Activated naive CD4-positive, alpha-beta T cell treated with anti-CD3 and anti-CD28 coated beads for 36 hours (primary cell): ENCODE measurements at regions of chr1 and their contacts with region 1.

Region 1: GRCh38 chr1:30718636-30719405 is 4.6 kb downstream of the MATN1 start:
- DNase-seq: peak; percentile 88
- H3K4me3 Mint-ChIP-seq: peak overlapping the region; percentile 94
- H3K27ac Mint-ChIP-seq: peak overlapping the region; percentile 92
- H3K4me1 Mint-ChIP-seq: peaks cover 21% of the 10 kb centered on the region
- H3K27me3 Mint-ChIP-seq: no peaks in the 10 kb centered on the region

Region 2: DNA sequence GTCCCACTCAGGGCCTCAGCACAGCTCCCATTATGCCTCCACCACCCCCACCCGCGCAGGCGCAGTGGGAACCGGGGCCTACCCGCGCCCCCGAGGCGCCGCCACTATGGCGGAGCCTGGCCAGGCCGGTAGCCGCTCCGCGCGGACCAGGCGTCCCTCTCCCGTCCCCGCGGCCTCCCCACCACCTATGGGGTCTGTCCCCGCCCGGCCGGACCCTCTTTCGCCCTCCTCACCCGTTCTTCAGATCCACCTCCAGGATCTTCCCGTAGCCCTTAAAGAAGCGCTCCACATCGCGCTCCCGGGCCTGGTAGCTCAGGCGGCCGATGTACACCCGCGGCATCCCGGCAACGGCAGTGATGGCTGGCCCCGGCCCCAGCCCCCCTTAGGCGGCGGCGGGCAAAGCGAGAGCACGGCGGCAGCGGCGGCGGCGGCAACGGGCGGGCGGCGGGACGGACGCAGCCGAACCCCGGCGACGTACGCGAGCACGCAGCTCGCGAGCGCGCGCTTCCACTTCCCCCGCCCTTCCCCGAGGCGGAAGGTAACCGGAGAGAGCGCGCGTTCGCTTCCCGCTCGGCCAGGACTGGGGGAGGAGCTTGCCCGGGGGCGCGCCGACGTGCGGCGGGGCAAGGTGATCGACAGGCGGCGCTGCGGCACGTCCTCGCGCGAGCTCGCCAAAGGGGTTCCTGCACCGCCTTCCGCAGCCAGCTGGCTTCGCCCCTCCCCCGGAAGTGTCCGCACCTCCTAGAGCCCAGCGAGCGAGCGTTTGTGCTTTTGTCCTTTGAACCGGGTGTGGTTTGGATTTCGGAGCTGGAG is 1537.2 kb before region 1 on chr1 and contains the start of gene SRSF4:
- CTCF ChIA-PET with region 1: no interaction called
- intact Hi-C with region 1: loop called (anchors 1 kb)
- DNase-seq: peak; percentile 99
- H3K4me3 Mint-ChIP-seq: peak within 1 kb of the TSS; percentile 93
- H3K27ac Mint-ChIP-seq: peak within 1 kb of the TSS; percentile 98
- H3K4me1 Mint-ChIP-seq: peaks cover 37% of the 10 kb centered on the region
- H3K27me3 Mint-ChIP-seq: no peaks in the 10 kb centered on the region
- total RNA-seq, gene SRSF4: 166 to 170 TPM

Region 3: DNA sequence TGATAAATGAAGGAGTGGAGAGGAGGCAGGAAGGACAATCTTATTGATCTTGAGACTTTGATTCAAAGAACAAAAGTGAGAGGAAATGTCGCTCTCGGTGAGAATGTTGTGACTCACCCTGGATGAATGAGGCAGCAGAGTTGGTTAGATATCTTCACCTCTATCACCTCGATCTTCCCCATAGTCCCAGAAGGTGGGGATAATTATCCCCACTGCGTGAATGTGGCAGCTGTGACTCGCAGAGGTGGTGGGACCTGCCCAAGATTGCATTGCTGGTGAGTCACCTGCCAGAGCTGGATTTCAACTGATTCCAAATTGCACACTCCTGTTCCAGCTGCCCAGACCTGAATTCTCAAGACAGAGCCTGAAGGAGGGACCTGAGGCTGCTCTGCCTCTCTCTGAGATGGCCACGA is 100.5 kb before region 1 on chr1:
- CTCF ChIA-PET with region 1: no interaction called
- intact Hi-C with region 1: no loop called
- DNase-seq: peak; percentile 20
- H3K4me3 Mint-ChIP-seq: no peak overlapping the region
- H3K27ac Mint-ChIP-seq: no peak overlapping the region
- H3K4me1 Mint-ChIP-seq: peaks cover 5% of the 10 kb centered on the region
- H3K27me3 Mint-ChIP-seq: no peaks in the 10 kb centered on the region

Region 4: DNA sequence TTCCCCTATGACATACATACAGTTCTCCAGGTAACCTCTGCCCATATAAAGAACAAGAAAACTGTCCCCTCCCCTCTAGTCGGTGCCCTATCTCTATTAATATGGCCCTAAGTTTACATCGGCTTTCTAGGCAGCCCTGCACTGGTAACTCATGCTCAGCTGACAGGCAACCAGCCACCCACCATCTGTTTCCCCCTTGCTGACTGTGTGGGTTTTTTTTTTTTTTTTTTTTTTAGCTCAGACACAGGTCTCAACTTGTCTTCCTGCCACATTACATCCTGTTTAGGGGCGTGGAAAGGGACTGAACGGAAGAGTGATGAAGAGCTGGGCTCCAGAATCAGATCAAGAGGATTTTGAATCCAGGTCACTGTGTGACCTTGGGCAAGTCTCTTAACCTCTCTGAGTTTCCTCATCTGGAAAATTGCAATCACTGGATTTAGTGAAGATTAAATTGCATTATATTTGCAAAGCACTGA is 24.8 kb after region 1 on chr1:
- CTCF ChIA-PET with region 1: interaction called, 14 read pairs
- intact Hi-C with region 1: loop called (anchors 1 kb)
- DNase-seq: peak; percentile 86
- H3K4me3 Mint-ChIP-seq: peak overlapping the region; percentile 59
- H3K27ac Mint-ChIP-seq: peak overlapping the region; percentile 100
- H3K4me1 Mint-ChIP-seq: peaks cover 89% of the 10 kb centered on the region
- H3K27me3 Mint-ChIP-seq: no peaks in the 10 kb centered on the region

Region 5: DNA sequence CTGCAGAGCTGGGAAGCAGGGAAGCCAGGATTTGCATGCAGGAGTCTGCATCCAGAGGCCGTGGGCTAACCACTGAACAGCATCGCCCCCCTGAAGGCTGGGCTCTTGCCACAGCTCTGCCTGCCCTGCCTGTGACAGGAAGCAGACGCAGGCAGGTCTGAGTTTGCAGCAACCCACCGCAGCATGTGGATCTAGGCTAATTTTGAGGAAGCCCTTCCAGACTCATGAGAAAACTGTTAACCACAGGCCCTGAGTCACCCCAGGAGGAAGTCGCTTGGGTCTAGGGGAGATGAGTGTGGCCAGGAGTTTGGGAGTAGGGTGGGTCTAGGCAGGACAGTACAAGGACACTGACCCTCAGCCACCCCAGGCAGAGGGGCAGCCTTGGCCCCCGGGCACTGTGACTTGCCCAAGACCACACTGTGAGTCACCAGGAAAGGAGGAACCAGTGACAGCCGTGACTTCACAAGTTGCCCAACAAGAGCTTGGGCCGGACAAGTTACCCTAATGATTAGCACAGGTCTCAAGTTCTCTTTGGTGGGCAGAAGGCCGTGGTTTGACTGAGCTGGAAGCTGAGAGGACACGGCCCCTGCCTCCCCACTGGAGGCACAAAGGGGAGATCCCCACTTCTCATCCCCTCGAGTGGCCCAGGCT is 37.8 kb after region 1 on chr1:
- CTCF ChIA-PET with region 1: interaction called, 39 read pairs
- intact Hi-C with region 1: loop called (anchors 1 kb)
- DNase-seq: peak; percentile 91
- H3K4me3 Mint-ChIP-seq: peak overlapping the region; percentile 98
- H3K27ac Mint-ChIP-seq: peak overlapping the region; percentile 100
- H3K4me1 Mint-ChIP-seq: peaks cover 76% of the 10 kb centered on the region
- H3K27me3 Mint-ChIP-seq: no peaks in the 10 kb centered on the region

Region 6: GRCh38 chr1:30801771-30802198 is 83.0 kb after region 1 on chr1:
- CTCF ChIA-PET with region 1: interaction called, 23 read pairs
- intact Hi-C with region 1: no loop called
- DNase-seq: peak; percentile 88
- H3K4me3 Mint-ChIP-seq: no peak overlapping the region
- H3K27ac Mint-ChIP-seq: no peak overlapping the region
- H3K4me1 Mint-ChIP-seq: peaks cover 3% of the 10 kb centered on the region
- H3K27me3 Mint-ChIP-seq: peaks cover 28% of the 10 kb centered on the region

Region 7: GRCh38 chr1:30888391-30888790 is 169.6 kb after region 1 on chr1:
- CTCF ChIA-PET with region 1: no interaction called
- intact Hi-C with region 1: no loop called
- DNase-seq: no peak
- H3K4me3 Mint-ChIP-seq: no peak overlapping the region
- H3K27ac Mint-ChIP-seq: no peak overlapping the region
- H3K4me1 Mint-ChIP-seq: no peaks in the 10 kb centered on the region
- H3K27me3 Mint-ChIP-seq: peaks cover 3% of the 10 kb centered on the region

Region 8: DNA sequence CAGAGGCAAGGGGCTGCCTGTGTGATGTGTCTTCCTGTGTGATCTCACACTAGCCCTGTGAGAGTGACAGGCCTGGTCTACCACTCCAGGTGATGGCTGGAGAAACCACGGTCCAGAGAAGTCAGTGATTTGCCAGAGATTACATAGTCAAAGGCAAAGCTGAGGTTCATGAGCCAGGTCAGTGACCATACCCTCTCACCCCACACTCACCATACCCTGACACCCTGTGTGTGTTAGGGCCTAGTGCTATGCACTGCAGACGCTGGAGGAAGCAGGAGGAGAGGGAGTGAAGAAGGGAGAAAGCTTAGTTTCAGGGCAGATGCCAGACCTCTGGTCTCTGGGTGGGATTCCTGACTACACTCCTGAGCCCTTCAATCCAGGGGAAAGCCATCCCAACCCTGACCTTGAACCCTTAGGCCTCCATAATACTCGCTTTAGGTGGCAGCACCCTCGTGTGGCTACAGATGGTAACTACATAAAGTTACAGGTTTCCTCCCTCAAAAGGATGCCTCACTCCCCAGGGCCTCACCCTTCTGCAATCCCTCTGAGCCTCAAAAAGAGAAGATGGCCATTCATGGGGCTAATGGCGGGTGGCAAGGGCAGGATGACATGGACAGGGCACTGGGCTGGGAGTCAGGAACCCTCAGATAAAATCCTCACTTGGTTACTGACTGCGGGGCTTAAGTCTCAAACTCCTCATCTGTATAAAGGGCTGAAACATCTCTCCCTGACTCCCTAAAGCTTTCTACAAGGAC is 210.5 kb after region 1 on chr1:
- CTCF ChIA-PET with region 1: interaction called, 4 read pairs
- intact Hi-C with region 1: loop called (anchors 5 kb)
- DNase-seq: peak; percentile 74
- H3K4me3 Mint-ChIP-seq: no peak overlapping the region
- H3K27ac Mint-ChIP-seq: no peak overlapping the region
- H3K4me1 Mint-ChIP-seq: no peaks in the 10 kb centered on the region
- H3K27me3 Mint-ChIP-seq: no peaks in the 10 kb centered on the region

Region 9: DNA sequence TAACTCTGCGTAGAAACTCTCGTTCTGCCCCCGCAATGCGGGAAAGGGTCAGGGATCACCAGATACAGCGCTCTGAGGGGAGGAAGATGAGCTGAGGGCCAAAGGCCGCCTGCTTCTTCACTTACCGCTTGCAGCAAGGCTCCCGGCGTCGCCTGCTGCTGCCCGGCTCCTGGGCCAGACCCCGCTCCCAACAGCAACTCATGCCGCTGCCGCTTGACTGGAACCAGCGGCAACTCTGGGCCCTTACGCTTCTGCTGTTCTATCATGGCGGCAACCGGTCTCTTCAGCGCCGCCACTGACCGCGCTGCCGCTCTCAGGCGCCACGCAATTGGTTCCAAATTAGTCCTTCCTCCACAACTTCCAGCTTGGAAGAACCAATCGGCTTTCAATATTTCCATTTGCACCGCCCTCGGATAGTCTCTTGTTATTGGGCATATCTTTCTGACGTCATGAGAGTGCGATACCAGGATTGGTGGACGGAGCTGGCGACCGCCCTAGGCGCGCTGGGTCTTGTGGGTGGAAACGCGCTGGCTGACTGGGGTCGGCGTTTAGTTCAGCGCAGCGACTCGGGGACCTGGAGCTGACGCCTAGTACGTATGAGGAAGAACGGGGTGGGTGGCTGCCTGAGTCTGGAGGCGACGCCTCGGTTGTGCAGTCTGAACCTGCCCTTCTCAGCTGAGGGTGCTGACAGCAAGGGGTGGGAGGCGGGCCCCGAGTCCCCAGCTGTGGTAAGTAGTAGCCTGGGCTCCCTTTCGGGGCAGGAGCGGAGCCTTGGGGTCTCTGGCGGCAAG is 577.9 kb after region 1 on chr1 and contains the starts of genes SNRNP40 and ZCCHC17:
- CTCF ChIA-PET with region 1: no interaction called
- intact Hi-C with region 1: loop called (anchors 2 kb)
- DNase-seq: peak; percentile 97
- H3K4me3 Mint-ChIP-seq: no peak within 1 kb of the TSS
- H3K27ac Mint-ChIP-seq: no peak within 1 kb of the TSS
- H3K4me1 Mint-ChIP-seq: peaks cover 36% of the 10 kb centered on the region
- H3K27me3 Mint-ChIP-seq: no peaks in the 10 kb centered on the region
- total RNA-seq, gene SNRNP40: 101 to 106 TPM
- total RNA-seq, gene ZCCHC17: 20.8 to 21.2 TPM